ENCODE measurements at regions of chr15 and their contacts with region 1.

Region 1: GRCh38 chr15:68783226-68784058 is 37.3 kb downstream of the ANP32A start:
- DNase-seq: no peak
- H3K4me3 ChIP-seq: no peak overlapping the region
- H3K27me3 ChIP-seq: no peaks in the 10 kb centered on the region
- CTCF ChIP-seq: peak; percentile 68

Region 2: DNA sequence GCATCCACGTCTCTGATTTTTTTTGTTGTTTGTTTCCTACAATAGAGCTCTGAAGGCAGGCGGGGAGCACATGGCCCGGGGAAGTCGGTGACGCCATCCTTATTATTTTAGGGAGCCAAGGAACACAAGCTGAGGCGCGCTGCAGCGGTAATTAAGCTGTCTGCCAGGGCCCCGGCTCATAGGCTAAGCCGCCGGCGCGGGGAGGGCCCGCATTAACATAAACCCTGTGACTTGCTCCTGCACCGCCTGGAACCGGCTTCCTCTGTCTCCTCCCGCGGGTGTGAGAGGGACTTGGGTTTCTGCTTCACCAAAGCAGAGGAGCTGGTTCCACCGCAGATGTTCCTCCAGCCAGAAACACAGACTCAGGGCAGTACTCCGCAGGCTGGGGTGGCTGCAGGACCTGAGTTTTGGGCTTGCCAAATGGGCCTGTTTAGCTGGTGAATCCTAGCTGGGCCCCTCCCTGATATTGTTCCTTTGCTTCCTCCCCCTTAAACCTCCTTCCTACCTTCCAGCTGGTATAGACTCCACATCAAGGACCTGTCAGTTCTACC is 11.9 kb after region 1 on chr15:
- CTCF ChIA-PET with region 1: interaction called, 19 read pairs
- POLR2A ChIA-PET with region 1: no interaction called
- DNase-seq: peak; percentile 37
- H3K4me3 ChIP-seq: no peak overlapping the region
- H3K27me3 ChIP-seq: no peaks in the 10 kb centered on the region
- CTCF ChIP-seq: no peak